MCF 10A (cell line): ENCODE measurements at regions of chr2 and their contacts with region 1.

Region 1: GRCh38 chr2:38239461-38239860 is 137.6 kb downstream of the ATL2 start:
- DNase-seq: peak; percentile 95
- H3K4me3 Mint-ChIP-seq: peak overlapping the region; percentile 72
- H3K27ac Mint-ChIP-seq: peak overlapping the region; percentile 83
- H3K4me1 Mint-ChIP-seq: peaks cover 39% of the 10 kb centered on the region
- H3K27me3 Mint-ChIP-seq: no peaks in the 10 kb centered on the region
- CTCF ChIP-seq: no peak

Region 2: GRCh38 chr2:38115216-38116032 is 124.0 kb before region 1 on chr2:
- CTCF ChIA-PET with region 1: no interaction called
- POLR2A ChIA-PET with region 1: interaction called, 6 read pairs
- intact Hi-C with region 1: loop called (anchors 1 kb)
- DNase-seq: peak; percentile 94
- H3K4me3 Mint-ChIP-seq: no peak overlapping the region
- H3K27ac Mint-ChIP-seq: no peak overlapping the region
- H3K4me1 Mint-ChIP-seq: peaks cover 28% of the 10 kb centered on the region
- H3K27me3 Mint-ChIP-seq: no peaks in the 10 kb centered on the region
- CTCF ChIP-seq: peak; percentile 96

Region 3: GRCh38 chr2:38146275-38146906 is 93.1 kb before region 1 on chr2:
- CTCF ChIA-PET with region 1: interaction called, 3 read pairs
- POLR2A ChIA-PET with region 1: interaction called, 27 read pairs
- intact Hi-C with region 1: no loop called
- DNase-seq: peak; percentile 86
- H3K4me3 Mint-ChIP-seq: peak overlapping the region; percentile 20
- H3K27ac Mint-ChIP-seq: no peak overlapping the region
- H3K4me1 Mint-ChIP-seq: peaks cover 5% of the 10 kb centered on the region
- H3K27me3 Mint-ChIP-seq: no peaks in the 10 kb centered on the region
- CTCF ChIP-seq: no peak

Region 4: GRCh38 chr2:38178547-38179419 is 60.7 kb before region 1 on chr2:
- CTCF ChIA-PET with region 1: interaction called, 3 read pairs
- POLR2A ChIA-PET with region 1: interaction called, 37 read pairs
- intact Hi-C with region 1: loop called (anchors 1 kb)
- DNase-seq: peak; percentile 83
- H3K4me3 Mint-ChIP-seq: peak overlapping the region; percentile 12
- H3K27ac Mint-ChIP-seq: peak overlapping the region; percentile 60
- H3K4me1 Mint-ChIP-seq: peaks cover 48% of the 10 kb centered on the region
- H3K27me3 Mint-ChIP-seq: no peaks in the 10 kb centered on the region
- CTCF ChIP-seq: no peak

Region 5: GRCh38 chr2:38185012-38185491 is 54.4 kb before region 1 on chr2:
- CTCF ChIA-PET with region 1: no interaction called
- POLR2A ChIA-PET with region 1: interaction called, 37 read pairs
- intact Hi-C with region 1: no loop called
- DNase-seq: peak; percentile 31
- H3K4me3 Mint-ChIP-seq: no peak overlapping the region
- H3K27ac Mint-ChIP-seq: no peak overlapping the region
- H3K4me1 Mint-ChIP-seq: peaks cover 15% of the 10 kb centered on the region
- H3K27me3 Mint-ChIP-seq: no peaks in the 10 kb centered on the region
- CTCF ChIP-seq: no peak

Region 6: DNA sequence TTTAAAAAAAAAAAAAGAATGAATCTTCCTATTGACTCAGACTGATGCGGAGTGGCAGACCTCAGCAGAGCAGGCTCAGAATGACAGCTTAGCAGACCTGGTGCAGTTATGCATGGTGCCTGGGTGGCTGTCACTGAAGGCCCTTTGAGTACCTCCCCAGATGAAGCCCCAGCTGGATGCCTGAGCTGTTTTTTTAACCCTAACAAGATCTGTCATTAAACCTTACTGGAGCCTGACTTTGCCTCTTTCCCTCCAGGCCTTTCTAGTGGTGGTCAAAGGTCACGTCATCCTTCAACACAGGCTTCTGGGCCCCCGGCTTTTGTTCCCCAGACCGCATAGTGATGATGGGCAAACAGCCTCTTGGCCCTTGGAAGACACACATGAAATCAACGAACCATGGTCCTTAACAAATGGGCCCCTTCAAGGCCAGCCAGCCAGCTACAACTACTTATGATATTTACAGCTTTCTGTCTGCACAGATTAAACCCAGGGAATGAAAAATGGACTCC is 25.2 kb before region 1 on chr2:
- CTCF ChIA-PET with region 1: interaction called, 3 read pairs
- POLR2A ChIA-PET with region 1: interaction called, 36 read pairs
- intact Hi-C with region 1: no loop called
- DNase-seq: no peak
- H3K4me3 Mint-ChIP-seq: no peak overlapping the region
- H3K27ac Mint-ChIP-seq: peak overlapping the region; percentile 74
- H3K4me1 Mint-ChIP-seq: peaks cover 44% of the 10 kb centered on the region
- H3K27me3 Mint-ChIP-seq: no peaks in the 10 kb centered on the region
- CTCF ChIP-seq: no peak